ENCODE measurements at regions of chr16 and their contacts with region 1.

Region 1: DNA sequence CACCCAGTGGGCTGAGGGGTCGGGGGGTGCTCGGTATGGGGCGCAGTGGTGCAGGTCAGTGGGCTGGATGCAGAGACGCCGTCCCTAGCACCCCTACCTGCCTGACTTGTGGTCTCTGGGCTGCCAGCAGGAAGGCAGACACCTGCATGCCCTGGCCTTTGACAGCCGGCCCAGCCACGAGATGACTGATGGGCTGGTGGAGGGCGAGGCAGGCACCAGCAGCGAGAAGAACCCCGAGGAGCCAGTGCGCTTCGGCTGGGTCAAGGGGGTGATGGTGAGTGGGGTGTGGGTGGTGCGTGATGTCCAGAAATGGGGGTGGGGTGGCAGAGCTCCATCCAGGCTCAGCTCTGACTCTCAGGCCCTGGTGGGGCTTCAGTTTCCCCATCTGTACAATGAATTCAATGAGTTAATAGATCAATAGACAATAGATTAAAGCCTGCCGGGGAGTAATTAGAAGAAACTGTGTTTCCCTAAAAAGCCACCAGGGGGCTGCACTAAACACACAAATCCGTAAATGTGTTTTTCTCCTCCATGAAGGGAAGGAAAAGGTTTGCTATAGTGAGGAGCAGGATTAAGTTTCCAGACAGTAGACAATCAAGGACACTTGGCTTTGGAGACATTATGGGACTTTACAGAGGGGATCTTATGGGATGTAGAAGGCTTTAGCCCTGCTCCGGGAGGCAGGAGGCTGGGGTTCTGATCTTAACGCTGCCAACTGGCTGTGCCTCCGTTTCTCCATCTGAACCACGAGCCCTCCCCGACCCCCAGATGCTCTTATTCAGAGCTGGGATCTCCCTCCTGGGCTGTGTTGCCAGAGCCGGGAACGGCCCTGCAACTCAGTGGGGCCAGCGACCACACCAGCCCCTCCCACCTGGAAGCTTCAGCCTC is 2.2 kb downstream of the SLC12A3 start:
- DNase-seq: peak; percentile 63
- H3K4me3 Mint-ChIP-seq: no peak overlapping the region
- H3K27ac Mint-ChIP-seq: no peak overlapping the region
- H3K4me1 Mint-ChIP-seq: peaks cover 5% of the 10 kb centered on the region
- H3K27me3 Mint-ChIP-seq: no peaks in the 10 kb centered on the region
- CTCF ChIP-seq: peak; percentile 66

Region 2: GRCh38 chr16:56950881-56951771 is 83.9 kb after region 1 on chr16:
- CTCF ChIA-PET with region 1: interaction called, 3 read pairs
- POLR2A ChIA-PET with region 1: interaction called, 4 read pairs
- intact Hi-C with region 1: loop called (anchors 1 kb)
- DNase-seq: peak; percentile 43
- H3K4me3 Mint-ChIP-seq: no peak overlapping the region
- H3K27ac Mint-ChIP-seq: no peak overlapping the region
- H3K4me1 Mint-ChIP-seq: no peaks in the 10 kb centered on the region
- H3K27me3 Mint-ChIP-seq: no peaks in the 10 kb centered on the region
- CTCF ChIP-seq: peak; percentile 27

Measured in MCF 10A (cell line).